ENCODE measurements at regions of chr17 and their contacts with region 1.

Region 1: DNA sequence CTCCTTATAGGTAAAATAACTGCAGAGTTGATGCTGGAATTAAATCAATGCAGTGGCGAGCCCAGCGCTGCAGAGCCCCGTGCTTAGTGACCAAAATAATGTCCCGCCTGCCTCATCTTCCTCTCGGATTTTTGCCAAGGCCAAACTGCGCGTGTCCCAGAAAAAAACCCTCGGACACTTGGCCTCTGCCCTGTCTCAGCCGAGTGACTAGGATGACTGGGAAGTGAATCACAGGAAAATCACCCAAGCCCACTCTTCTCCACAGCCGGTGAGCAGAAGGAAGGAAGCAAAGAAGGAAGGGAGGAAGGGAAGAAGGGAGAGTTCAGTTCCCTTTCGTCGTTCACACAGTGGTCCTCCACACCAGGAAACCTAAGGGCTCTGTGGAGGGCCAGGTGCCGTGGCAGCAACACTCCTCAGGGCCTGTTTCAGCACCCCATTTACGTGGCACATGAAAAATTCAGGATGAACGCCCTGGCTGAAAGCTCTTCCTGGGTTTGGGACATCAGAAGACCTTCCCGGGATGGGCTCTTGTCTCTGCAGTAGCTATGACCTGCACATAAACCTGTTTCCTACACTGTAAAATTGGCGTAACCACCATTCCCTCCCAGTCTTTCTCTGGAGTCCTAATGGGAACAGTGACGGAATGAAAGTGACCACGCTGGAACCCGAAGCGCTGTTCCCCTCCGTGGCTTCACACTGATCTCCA is 25.4 kb upstream of the HOXB13 start:
- DNase-seq: no peak

Region 2: DNA sequence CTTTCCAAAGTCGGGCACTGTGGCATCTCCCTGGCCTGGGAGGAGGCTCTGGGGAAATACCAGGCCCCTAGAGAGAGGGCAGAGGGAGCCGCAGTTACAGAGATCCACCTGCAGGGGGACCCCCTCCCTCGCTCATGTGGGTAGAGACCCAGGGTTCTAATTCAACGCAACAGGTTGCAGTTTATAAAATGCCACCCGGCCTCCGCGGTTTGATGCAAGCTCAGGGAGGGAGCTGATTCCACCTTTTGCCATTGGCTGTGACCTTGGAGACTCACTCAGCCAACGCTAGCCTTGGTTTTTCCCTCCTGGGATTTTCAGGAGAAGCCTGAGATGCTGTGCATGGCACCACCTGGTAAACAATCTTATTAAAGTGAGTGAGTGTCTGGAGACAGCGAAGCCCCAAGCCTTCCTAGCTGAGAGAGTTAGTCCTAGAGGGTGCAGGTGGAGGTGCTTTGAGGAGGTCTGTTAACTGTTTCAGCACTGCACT is 51.0 kb after region 1 on chr17:
- in situ Hi-C with region 1: loop called (anchors 5 kb)
- DNase-seq: peak; percentile 49

Region 3: DNA sequence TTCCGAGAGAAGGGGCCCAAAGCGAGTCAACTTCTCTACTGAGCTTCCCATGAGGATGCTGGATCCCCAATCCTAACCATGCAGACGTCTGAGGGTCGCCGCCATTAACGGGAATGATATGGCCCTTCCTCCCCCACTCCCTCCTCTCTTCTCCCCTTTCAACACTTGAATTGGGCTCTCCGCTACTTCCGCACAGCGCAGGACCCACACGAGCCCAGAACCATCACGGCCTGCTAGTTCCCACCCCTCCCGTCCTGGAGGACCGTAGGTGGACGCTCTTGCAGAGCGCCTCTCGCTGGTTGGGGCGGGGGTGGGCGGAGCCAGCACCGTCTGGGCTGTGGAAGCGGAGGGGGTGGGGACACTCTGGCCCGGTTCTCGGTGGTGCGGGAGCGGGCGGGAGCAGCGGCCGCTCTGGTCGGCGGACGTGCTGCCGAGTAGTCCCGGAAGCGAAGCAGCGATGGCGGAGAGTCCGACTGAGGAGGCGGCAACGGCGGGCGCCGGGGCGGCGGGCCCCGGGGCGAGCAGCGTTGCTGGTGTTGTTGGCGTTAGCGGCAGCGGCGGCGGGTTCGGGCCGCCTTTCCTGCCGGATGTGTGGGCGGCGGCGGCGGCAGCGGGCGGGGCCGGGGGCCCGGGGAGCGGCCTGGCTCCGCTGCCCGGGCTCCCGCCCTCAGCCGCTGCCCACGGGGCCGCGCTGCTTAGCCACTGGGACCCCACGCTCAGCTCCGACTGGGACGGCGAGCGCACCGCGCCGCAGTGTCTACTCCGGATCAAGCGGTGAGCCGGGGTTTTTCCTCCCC is 154.3 kb after region 1 on chr17 and contains the start of gene UBE2Z:
- in situ Hi-C with region 1: no loop called
- DNase-seq: peak; percentile 98
- total RNA-seq, gene UBE2Z: 71.2 and 71.3 TPM in 2 replicates